HepG2 (cell line): ENCODE measurements at regions of chr3 and their contacts with region 1.

Region 1: DNA sequence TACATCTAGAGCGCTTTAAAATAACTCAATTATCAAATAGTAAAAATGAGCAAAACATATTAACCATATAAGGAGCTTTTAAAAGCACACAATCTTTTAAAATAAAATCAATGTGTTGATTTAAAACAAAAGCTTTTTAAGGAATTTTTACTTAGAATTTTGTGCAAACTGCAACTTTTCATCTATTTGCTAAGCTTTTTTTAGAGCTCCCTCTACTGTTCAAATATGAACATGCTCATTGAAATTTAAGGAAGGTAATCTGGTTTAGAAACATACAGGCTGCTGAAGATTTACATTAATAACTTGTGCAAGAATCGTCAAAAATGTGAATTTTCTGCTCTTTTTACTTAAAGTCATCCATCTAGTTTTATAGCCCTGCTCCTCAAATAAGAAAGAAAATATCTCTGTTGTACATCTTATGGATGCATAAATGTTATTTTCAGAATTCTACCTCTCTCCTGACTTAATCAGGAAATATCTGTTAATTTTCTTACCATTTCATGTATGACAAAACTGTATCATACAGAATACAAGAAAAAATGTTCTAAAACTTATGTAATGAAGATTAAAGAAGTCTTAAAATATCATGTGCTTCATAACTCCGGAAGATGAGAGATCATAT is 469.4 kb upstream of the ROBO2 start:
- DNase-seq: no peak
- ATAC-seq: no peak
- H3K4me3 ChIP-seq: no peak overlapping the region
- H3K27ac ChIP-seq: no peak overlapping the region
- H3K4me1 ChIP-seq: no peaks in the 10 kb centered on the region
- H3K27me3 ChIP-seq: no peaks in the 10 kb centered on the region
- CTCF ChIP-seq: peak; percentile 44; the same call in 1 of the 2 replicates
- EP300 ChIP-seq: no peak
- POLR2A ChIP-seq: no peak
- RAD21 ChIP-seq: no peak

Region 2: DNA sequence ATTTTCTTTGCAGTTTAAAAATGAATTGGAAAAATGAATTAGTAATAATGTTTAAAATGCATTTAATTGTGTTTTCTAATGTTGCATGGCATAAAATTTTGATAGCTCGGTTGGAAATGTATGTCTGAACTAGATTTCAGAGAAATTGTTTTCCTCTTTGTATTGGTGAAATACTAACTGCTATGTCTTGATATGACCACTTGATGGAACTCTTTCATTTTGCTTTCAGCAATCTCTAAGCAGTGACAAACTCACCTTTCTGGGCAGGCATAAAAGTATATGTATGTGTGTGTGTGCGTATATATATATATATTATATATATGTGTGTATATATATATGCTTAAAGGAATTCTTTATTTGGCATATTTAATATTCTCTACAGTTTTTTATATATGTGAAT is 545.9 kb before region 1 on chr3:
- CTCF ChIA-PET with region 1: no interaction called
- POLR2A ChIA-PET with region 1: no interaction called
- in situ Hi-C with region 1: no loop called
- intact Hi-C with region 1: loop called (anchors 10 kb)
- DNase-seq: peak; percentile 3
- ATAC-seq: peak; percentile 62; the same call in 2 of the 3 replicates
- H3K4me3 ChIP-seq: peak overlapping the region in 1 of 3 experiments; percentile 12; a peak in 1 of 6 replicates
- H3K27ac ChIP-seq: no peak overlapping the region
- H3K4me1 ChIP-seq: no peaks in the 10 kb centered on the region
- H3K27me3 ChIP-seq: no peaks in the 10 kb centered on the region
- CTCF ChIP-seq: peak; percentile 39
- EP300 ChIP-seq: no peak
- POLR2A ChIP-seq: no peak
- RAD21 ChIP-seq: no peak

Region 3: GRCh38 chr3:76369178-76369577 is 201.4 kb before region 1 on chr3:
- CTCF ChIA-PET with region 1: no interaction called
- POLR2A ChIA-PET with region 1: no interaction called
- in situ Hi-C with region 1: no loop called
- intact Hi-C with region 1: loop called (anchors 1 kb)
- DNase-seq: no peak
- ATAC-seq: peak; percentile 67
- H3K4me3 ChIP-seq: no peak overlapping the region
- H3K27ac ChIP-seq: no peak overlapping the region
- H3K4me1 ChIP-seq: no peaks in the 10 kb centered on the region
- H3K27me3 ChIP-seq: no peaks in the 10 kb centered on the region
- CTCF ChIP-seq: peak; percentile 12; the same call in 1 of the 2 replicates
- EP300 ChIP-seq: no peak
- POLR2A ChIP-seq: no peak
- RAD21 ChIP-seq: no peak